Heart left ventricle (tissue), 16 donors: ENCODE measurements at regions of chr15 and their contacts with region 1.

Region 1: DNA sequence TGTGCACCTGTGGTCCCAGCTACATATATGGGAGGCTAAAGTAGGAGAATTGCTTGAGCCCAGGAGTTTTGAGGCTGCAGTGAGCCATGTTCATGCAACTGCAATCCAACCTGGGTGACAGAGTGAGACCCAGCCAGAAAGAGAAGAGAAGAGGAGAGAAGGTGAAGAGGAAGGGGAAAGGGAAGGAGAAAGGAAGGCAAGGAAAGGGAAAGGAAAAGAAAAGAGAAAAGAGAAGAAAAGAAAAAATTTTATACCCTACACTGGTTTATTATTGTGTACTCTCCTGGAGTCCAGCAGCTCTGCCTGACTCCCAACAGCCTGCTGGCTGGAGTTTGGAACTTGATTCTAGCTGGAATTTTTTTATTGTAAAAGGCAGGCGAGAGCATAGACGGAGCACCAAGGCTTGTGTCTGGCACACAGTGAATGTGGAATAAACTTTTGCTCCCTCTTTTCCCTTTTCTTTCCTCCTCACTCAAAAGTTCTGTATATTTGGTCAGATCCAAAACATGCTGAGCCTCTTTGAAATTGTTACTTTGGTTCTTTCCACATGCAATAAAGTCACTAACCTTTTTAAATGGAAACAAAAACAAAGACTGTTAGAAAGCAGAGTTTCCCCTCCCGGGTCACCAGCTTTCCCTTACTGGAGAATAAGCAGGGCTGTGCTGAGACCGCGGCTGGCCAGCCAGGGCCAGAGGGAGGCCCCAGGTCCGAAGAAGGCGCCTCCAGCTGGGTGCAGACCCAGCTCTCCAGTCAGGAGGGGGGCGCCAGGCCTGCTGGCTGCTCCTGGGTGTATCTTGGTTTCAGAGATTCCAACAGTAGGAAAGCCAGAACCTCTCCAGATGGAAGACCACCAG is 9.9 kb downstream of the THSD4 start:
- DNase-seq: no peak
- ATAC-seq: peak; percentile 22 to 53 (median 40)
- H3K4me3 ChIP-seq: peak overlapping the region in 2 of 12 donors; percentile 2 to 25
- H3K27ac ChIP-seq: peak overlapping the region; percentile 4 to 90 (median 74)
- H3K4me1 ChIP-seq: peaks cover 0 to 77% (median 18%) of the 10 kb centered on the region in 12 donors
- H3K27me3 ChIP-seq: no peaks in the 10 kb centered on the region
- CTCF ChIP-seq: no peak
- POLR2A ChIP-seq: no peak

Region 2: GRCh38 chr15:71055461-71055860 is 69.7 kb before region 1 on chr15:
- intact Hi-C with region 1: no loop called
- DNase-seq: no peak
- ATAC-seq: no peak
- H3K4me3 ChIP-seq: no peak overlapping the region
- H3K27ac ChIP-seq: no peak overlapping the region
- H3K4me1 ChIP-seq: peaks cover 0 to 17% (median 1%) of the 10 kb centered on the region in 12 donors
- H3K27me3 ChIP-seq: no peaks in the 10 kb centered on the region
- CTCF ChIP-seq: no peak
- POLR2A ChIP-seq: no peak

Region 3: GRCh38 chr15:71337207-71337700 is 212.1 kb after region 1 on chr15:
- intact Hi-C with region 1: loop called in 1 of 10 experiments (anchors 5 kb)
- DNase-seq: no peak
- ATAC-seq: peak in 1 of 4 donors; percentile 18
- H3K4me3 ChIP-seq: no peak overlapping the region
- H3K27ac ChIP-seq: peak overlapping the region in 11 of 12 donors; percentile 51 to 94 (median 86)
- H3K4me1 ChIP-seq: peaks cover 0 to 33% (median 6%) of the 10 kb centered on the region in 12 donors
- H3K27me3 ChIP-seq: no peaks in the 10 kb centered on the region
- CTCF ChIP-seq: no peak
- POLR2A ChIP-seq: no peak